GM12878 (cell line): ENCODE measurements at regions of chr4 and their contacts with region 1.

Region 1: GRCh38 chr4:118278473-118279274 is 74.1 kb downstream of the PRSS12 start:
- DNase-seq: peak; percentile 89
- ATAC-seq: peak; percentile 89
- H3K4me3 ChIP-seq: peak overlapping the region; percentile 82
- H3K27ac ChIP-seq: peak overlapping the region; percentile 80
- H3K4me1 ChIP-seq: peaks cover 5% of the 10 kb centered on the region; the same call in 1 of the 2 replicates
- H3K27me3 ChIP-seq: no peaks in the 10 kb centered on the region
- CTCF ChIP-seq: no peak
- EP300 ChIP-seq: peak in 1 of 2 experiments; percentile 68; a peak in 1 of 4 replicates
- POLR2A ChIP-seq: peak; percentile 94
- RAD21 ChIP-seq: no peak

Region 2: DNA sequence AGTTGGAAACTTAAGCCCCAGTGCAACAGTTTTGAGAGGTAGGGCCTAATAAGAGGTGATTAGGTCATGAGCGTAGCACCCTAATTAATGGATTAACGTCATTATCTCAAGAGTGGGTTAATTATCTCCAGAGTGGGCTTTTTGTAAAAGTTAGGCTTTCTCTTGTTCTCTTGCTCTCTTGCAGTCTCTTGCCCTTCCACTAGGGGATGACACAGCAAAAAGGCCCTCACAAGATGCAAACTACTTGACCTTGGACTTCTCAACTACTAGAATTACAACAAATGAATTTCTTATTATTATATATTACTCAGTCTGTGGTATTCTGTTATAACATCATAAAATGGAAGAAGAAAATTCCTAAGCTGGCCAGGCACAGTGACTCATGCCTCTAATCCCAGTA is 266.5 kb before region 1 on chr4:
- CTCF ChIA-PET with region 1: no interaction called
- POLR2A ChIA-PET with region 1: no interaction called
- RAD21 ChIA-PET with region 1: no interaction called
- SMC1A ChIA-PET with region 1: no interaction called
- in situ Hi-C with region 1: no loop called
- intact Hi-C with region 1: no loop called
- DNase-seq: no peak
- ATAC-seq: peak; percentile 57; the same call in 2 of the 3 replicates
- H3K4me3 ChIP-seq: no peak overlapping the region
- H3K27ac ChIP-seq: no peak overlapping the region
- H3K4me1 ChIP-seq: no peaks in the 10 kb centered on the region
- H3K27me3 ChIP-seq: no peaks in the 10 kb centered on the region
- CTCF ChIP-seq: peak in 2 of 3 experiments; percentile 27 to 32; a peak in 2 of 6 replicates
- EP300 ChIP-seq: no peak
- POLR2A ChIP-seq: no peak
- RAD21 ChIP-seq: no peak

Region 3: GRCh38 chr4:118352843-118353533 is 74.3 kb after region 1 on chr4 and contains the start of gene PRSS12:
- CTCF ChIA-PET with region 1: interaction called, 10 read pairs
- POLR2A ChIA-PET with region 1: interaction called, 4 read pairs
- RAD21 ChIA-PET with region 1: interaction called, 4 read pairs
- SMC1A ChIA-PET with region 1: interaction called, 6 read pairs
- in situ Hi-C with region 1: no loop called
- intact Hi-C with region 1: loop called (anchors 2 kb)
- DNase-seq: no peak
- ATAC-seq: peak; percentile 98
- H3K4me3 ChIP-seq: no peak within 1 kb of the TSS
- H3K27ac ChIP-seq: no peak within 1 kb of the TSS
- H3K4me1 ChIP-seq: no peaks in the 10 kb centered on the region
- H3K27me3 ChIP-seq: peaks cover 4 to 7% of the 10 kb centered on the region in 2 experiments
- CTCF ChIP-seq: peak; percentile 62 to 69 (median 65); a peak in 5 of 6 replicates
- EP300 ChIP-seq: no peak
- POLR2A ChIP-seq: no peak
- RAD21 ChIP-seq: no peak
- polyA plus RNA-seq, gene PRSS12: 0.04 to 0.14 TPM

Region 4: GRCh38 chr4:118417325-118417724 is 138.7 kb after region 1 on chr4:
- CTCF ChIA-PET with region 1: no interaction called
- POLR2A ChIA-PET with region 1: no interaction called
- RAD21 ChIA-PET with region 1: no interaction called
- SMC1A ChIA-PET with region 1: no interaction called
- in situ Hi-C with region 1: no loop called
- intact Hi-C with region 1: loop called (anchors 10 kb)
- DNase-seq: no peak
- ATAC-seq: peak; percentile 79
- H3K4me3 ChIP-seq: no peak overlapping the region
- H3K27ac ChIP-seq: no peak overlapping the region
- H3K4me1 ChIP-seq: no peaks in the 10 kb centered on the region
- H3K27me3 ChIP-seq: no peaks in the 10 kb centered on the region
- CTCF ChIP-seq: no peak
- EP300 ChIP-seq: no peak
- POLR2A ChIP-seq: no peak
- RAD21 ChIP-seq: no peak

Region 5: DNA sequence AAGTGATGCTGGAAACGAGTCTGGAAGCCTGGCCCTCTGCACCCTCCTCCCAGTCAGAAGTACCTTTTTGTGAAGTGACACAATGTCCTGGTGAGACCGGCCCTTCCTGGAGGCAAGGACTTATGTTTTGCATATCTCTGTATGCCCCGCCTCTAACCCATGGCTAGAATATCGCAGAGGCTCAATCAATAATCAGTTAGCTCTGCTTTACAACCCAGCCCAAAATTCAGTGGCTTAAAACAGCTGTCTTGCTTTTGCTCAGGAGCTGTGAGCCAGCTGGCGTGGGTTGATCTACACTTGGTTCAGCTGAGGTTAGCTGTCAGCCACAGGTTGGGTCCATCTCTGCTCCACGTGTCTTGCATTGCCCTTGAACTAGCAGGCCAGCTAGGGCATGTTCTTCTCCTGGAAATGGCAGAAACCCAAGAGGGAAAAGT is 307.7 kb after region 1 on chr4:
- CTCF ChIA-PET with region 1: no interaction called
- POLR2A ChIA-PET with region 1: no interaction called
- RAD21 ChIA-PET with region 1: no interaction called
- SMC1A ChIA-PET with region 1: no interaction called
- in situ Hi-C with region 1: loop called (anchors 10 kb)
- intact Hi-C with region 1: no loop called
- DNase-seq: no peak
- ATAC-seq: peak; percentile 9; the same call in 1 of the 3 replicates
- H3K4me3 ChIP-seq: no peak overlapping the region
- H3K27ac ChIP-seq: no peak overlapping the region
- H3K4me1 ChIP-seq: no peaks in the 10 kb centered on the region
- H3K27me3 ChIP-seq: no peaks in the 10 kb centered on the region; a peak in 1 of 4 replicates
- CTCF ChIP-seq: no peak
- EP300 ChIP-seq: no peak
- POLR2A ChIP-seq: no peak
- RAD21 ChIP-seq: no peak

Region 6: DNA sequence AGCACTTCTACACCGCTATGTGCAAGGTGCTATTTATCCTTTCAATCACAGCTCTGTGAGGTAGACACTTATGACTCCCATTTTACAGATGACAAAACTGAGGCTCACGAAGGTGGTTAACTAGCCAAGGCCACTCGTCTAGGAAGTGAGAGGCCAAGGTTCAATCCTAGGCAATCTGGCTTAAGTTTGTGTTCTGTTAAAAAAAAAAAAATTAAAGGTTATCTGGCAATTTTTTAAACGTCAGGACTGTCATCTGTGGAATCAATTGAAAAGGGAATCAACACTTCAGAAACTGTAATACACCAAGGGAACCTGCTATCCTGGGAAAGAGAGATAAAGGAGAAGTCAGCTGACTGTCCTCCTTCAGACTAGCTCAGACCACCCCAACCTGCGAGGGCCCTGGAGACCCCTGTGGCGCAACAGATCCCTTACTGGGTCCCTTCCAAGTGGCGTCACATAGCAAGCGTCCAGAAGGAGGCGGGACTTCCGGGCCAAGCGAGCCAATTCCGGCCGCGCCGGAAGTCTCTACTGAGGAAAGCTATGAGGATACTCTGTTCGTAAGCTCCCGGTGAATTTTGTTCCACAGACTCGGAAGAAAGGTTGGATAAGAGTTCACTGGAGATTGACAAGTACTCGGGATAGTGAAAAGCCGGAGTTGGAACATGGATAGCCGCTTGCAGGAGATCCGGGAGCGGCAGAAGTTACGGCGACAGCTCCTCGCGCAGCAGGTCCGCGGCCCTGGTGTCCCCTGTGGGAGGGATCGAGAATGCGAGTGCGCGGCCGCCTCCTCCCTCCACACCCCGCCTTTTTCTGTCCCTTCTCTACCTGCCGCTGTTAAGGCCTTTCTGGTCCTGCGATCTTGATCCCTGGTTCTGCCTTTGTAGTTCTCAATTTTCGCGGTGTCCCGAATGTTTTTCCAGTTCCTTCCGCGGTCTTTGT is 406.5 kb after region 1 on chr4 and contains the start of gene METTL14:
- CTCF ChIA-PET with region 1: interaction called, 3 read pairs
- POLR2A ChIA-PET with region 1: interaction called, 4 read pairs
- RAD21 ChIA-PET with region 1: no interaction called
- SMC1A ChIA-PET with region 1: interaction called, 3 read pairs
- in situ Hi-C with region 1: loop called (anchors 10 kb)
- intact Hi-C with region 1: loop called (anchors 1 kb)
- DNase-seq: peak; percentile 74
- ATAC-seq: peak; percentile 98
- H3K4me3 ChIP-seq: peak within 1 kb of the TSS; percentile 100
- H3K27ac ChIP-seq: peak within 1 kb of the TSS; percentile 76
- H3K4me1 ChIP-seq: peaks cover 6% of the 10 kb centered on the region; the same call in 1 of the 2 replicates
- H3K27me3 ChIP-seq: no peaks in the 10 kb centered on the region
- CTCF ChIP-seq: no peak
- EP300 ChIP-seq: no peak; a peak in 1 of 4 replicates
- POLR2A ChIP-seq: peak; percentile 86
- RAD21 ChIP-seq: no peak
- polyA plus RNA-seq, gene METTL14: 14.8 to 18.0 TPM

Region 7: DNA sequence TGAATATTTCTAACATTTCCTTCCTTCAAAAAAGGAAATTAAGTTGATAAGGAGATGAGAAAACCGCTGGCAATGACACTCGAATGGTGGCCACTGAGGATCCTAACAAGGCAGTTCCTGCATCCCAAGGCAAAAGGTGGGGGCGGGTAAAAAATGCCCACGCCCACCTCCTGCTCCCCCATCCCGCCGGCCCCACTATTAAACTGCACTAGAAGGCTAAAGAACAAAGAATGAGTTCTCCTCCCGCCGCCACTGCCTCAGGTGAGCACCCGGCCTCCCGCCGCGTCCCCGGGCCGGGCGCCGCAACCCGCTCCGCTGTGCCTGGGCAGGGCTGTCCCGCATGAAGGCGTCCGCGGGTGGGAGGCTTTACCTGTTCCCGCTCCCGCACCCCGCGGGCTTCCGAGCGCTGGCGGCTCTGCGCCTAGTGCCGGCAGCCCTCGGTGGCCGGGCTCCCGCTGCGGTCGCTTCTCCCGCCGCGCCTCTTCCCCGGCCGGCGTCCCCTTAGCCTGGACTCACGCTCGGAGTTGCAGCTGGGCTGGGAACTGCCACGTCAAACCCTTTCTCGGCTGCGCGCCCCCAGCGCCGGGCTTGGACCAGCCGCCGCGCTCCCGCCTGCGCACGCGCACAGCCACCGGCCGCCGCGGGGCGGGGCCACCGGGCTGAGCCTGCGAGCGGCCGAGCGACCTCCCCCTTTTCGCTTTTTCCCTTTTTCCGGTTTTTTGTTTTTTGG is 557.1 kb after region 1 on chr4 and contains the start of gene SEC24D:
- CTCF ChIA-PET with region 1: no interaction called
- POLR2A ChIA-PET with region 1: no interaction called
- RAD21 ChIA-PET with region 1: no interaction called
- SMC1A ChIA-PET with region 1: no interaction called
- in situ Hi-C with region 1: no loop called
- intact Hi-C with region 1: loop called (anchors 2 kb)
- DNase-seq: no peak
- ATAC-seq: peak; percentile 83
- H3K4me3 ChIP-seq: peak within 1 kb of the TSS; percentile 77
- H3K27ac ChIP-seq: peak within 1 kb of the TSS; percentile 92
- H3K4me1 ChIP-seq: peaks cover 8% of the 10 kb centered on the region
- H3K27me3 ChIP-seq: no peaks in the 10 kb centered on the region
- CTCF ChIP-seq: no peak
- EP300 ChIP-seq: no peak
- POLR2A ChIP-seq: peak; percentile 84
- RAD21 ChIP-seq: no peak
- polyA plus RNA-seq, gene SEC24D: 12.8 to 16.0 TPM